ENCODE measurements at regions of chr12 and their contacts with region 1.

Region 1: GRCh38 chr12:123457980-123458783 is at the start of gene SNRNP35:
- DNase-seq: peak; percentile 88
- H3K4me3 Mint-ChIP-seq: peak within 1 kb of the TSS; percentile 97
- H3K27ac Mint-ChIP-seq: peak within 1 kb of the TSS; percentile 99
- H3K4me1 Mint-ChIP-seq: peaks cover 23% of the 10 kb centered on the region
- H3K27me3 Mint-ChIP-seq: no peaks in the 10 kb centered on the region
- total RNA-seq, gene SNRNP35: 28.6 to 30.6 TPM

Region 2: GRCh38 chr12:123388177-123388947 is 69.8 kb before region 1 on chr12:
- CTCF ChIA-PET with region 1: interaction called, 4 read pairs
- POLR2A ChIA-PET with region 1: interaction called, 4 read pairs
- intact Hi-C with region 1: loop called (anchors 5 kb)
- DNase-seq: peak; percentile 86
- H3K4me3 Mint-ChIP-seq: peak overlapping the region; percentile 80
- H3K27ac Mint-ChIP-seq: peak overlapping the region; percentile 88
- H3K4me1 Mint-ChIP-seq: peaks cover 39% of the 10 kb centered on the region
- H3K27me3 Mint-ChIP-seq: no peaks in the 10 kb centered on the region

Region 3: DNA sequence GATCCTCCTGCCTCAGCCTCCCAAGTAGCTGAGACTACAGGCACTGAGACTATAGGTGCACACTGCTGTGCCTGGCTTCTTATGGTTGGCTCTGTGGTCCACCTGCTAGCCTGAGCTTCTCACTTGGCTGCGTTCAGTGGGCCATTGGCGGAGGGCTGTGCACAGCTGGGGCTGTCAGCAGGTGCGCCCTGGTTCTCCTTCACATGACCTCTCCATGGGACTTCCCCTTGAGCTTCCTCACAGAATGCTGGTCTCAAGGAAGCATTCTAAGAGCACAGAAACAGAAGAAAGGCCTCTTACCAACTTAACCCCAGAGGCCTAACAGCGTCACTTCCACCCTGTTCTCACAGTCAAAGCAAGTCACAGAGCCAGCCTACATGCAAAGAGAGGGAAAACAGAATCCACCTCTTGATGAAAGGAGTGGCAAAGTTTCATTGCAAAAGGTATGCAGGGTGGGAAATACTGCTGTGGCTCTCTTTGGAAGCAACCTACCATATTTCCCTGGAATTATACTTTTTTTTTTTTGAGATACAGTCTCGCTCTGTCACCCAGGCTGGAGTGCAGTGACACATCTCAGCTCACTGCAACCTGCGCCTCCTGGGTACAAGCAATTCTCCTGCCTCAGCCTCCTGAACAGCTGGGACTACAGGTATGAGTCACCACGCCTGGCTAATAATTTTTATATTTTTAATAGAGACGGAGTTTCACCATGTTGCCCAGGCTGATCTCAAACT is 31.0 kb before region 1 on chr12:
- CTCF ChIA-PET with region 1: interaction called, 8 read pairs
- POLR2A ChIA-PET with region 1: interaction called, 11 read pairs
- intact Hi-C with region 1: loop called (anchors 2 kb)
- DNase-seq: peak; percentile 64
- H3K4me3 Mint-ChIP-seq: peak overlapping the region; percentile 54
- H3K27ac Mint-ChIP-seq: peak overlapping the region; percentile 92
- H3K4me1 Mint-ChIP-seq: peaks cover 31% of the 10 kb centered on the region
- H3K27me3 Mint-ChIP-seq: no peaks in the 10 kb centered on the region

Region 4: DNA sequence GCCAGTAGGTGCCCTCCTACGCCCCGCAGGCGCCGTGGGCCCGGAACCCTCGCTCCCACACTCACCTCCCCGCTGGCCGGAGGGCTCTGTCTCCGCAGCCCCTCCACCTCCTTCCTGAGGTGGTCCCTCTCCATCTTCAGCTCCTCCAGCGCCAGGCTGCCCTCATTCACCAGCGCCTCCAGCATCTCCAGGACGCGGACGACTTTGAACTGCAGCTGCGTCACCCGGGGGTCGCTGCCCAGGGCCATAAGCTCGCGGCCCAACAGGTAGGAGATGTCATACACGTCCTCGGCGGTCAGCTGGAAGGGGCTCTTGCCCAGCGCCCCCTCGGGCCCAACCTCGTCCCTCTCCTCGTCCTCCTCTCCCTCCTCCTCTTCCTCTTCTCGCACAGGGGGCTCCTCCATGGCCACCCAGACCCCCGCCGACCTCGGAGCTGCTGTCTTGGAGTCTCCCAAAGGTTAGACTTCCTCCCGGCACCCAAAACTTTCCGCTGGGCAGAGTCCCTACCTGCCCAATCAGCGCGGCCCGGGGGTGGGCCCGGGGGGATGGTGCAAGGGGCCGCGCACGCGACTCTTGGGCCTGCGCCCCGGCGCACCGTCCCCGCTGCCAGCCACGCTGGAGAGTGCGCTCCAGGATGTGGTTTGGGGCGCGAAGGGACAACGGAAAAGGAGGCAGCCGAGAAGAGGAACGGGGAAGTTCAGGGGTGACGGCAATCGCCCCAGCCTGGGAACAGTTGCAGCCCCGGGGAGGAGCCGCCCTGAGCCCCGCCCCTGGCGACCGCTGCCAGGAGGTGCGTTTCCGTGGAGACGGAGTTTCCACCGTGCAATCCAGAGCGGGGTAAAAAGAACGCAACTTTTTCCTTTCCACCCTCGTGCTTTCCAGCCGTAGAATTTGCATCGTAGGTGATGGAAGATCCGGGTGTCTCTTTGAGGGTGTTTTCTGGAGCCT is 21.9 kb before region 1 on chr12 and contains the start of gene RILPL2:
- CTCF ChIA-PET with region 1: interaction called, 4 read pairs
- POLR2A ChIA-PET with region 1: interaction called, 16 read pairs
- intact Hi-C with region 1: loop called (anchors 1 kb)
- DNase-seq: peak; percentile 97
- H3K4me3 Mint-ChIP-seq: peak within 1 kb of the TSS; percentile 99
- H3K27ac Mint-ChIP-seq: peak within 1 kb of the TSS; percentile 98
- H3K4me1 Mint-ChIP-seq: peaks cover 30% of the 10 kb centered on the region
- H3K27me3 Mint-ChIP-seq: no peaks in the 10 kb centered on the region
- total RNA-seq, gene RILPL2: 15.4 to 16.6 TPM

Region 5: DNA sequence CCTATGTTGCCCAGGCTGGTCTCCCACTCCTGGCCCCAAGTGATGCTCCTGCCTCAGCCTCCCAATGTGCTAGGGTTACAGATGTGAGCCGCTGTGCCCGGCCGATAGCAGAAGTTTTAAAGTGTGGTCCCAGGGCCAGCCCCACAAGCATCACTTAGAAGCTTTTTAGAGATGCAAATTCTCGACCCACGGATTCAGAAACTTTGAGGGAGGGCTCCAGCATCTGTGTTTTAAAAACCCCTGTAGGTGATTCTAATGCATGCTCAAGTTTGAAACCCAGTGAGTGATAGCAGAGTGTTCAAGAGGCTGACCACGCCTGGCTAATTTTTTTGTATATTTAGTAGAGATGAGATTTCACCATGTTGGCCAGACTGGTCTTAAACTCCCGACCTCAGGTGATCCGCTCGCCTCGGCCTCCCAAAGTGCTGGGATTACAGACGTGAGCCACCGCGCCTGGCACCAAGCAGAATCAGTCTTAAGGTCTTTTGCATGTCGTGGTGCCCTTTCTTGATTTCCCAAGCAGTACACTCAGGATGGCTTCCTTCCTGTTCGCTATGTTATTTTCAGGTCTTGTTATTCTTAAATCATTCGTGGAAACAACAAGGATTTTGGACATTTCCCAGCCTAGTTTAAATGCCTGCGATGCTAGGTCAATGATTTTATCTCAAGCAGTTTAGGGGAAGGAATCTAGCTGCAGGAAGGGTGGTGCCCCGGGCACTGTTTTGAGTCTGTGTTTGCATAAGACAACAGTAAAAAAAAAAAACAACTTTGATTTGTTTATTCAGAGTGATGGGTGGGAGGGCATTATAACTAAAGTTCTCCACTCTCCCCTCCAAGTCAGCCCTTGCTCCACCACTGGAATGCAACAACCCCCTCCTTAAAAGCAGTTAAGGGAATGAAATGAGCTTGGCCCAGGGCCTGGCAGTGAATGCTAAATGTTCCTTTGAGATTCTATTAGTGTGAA is 12.5 kb before region 1 on chr12:
- CTCF ChIA-PET with region 1: interaction called, 4 read pairs
- POLR2A ChIA-PET with region 1: interaction called, 15 read pairs
- intact Hi-C with region 1: no loop called
- DNase-seq: no peak
- H3K4me3 Mint-ChIP-seq: no peak overlapping the region
- H3K27ac Mint-ChIP-seq: peak overlapping the region; percentile 67
- H3K4me1 Mint-ChIP-seq: peaks cover 36% of the 10 kb centered on the region
- H3K27me3 Mint-ChIP-seq: no peaks in the 10 kb centered on the region

Region 6: DNA sequence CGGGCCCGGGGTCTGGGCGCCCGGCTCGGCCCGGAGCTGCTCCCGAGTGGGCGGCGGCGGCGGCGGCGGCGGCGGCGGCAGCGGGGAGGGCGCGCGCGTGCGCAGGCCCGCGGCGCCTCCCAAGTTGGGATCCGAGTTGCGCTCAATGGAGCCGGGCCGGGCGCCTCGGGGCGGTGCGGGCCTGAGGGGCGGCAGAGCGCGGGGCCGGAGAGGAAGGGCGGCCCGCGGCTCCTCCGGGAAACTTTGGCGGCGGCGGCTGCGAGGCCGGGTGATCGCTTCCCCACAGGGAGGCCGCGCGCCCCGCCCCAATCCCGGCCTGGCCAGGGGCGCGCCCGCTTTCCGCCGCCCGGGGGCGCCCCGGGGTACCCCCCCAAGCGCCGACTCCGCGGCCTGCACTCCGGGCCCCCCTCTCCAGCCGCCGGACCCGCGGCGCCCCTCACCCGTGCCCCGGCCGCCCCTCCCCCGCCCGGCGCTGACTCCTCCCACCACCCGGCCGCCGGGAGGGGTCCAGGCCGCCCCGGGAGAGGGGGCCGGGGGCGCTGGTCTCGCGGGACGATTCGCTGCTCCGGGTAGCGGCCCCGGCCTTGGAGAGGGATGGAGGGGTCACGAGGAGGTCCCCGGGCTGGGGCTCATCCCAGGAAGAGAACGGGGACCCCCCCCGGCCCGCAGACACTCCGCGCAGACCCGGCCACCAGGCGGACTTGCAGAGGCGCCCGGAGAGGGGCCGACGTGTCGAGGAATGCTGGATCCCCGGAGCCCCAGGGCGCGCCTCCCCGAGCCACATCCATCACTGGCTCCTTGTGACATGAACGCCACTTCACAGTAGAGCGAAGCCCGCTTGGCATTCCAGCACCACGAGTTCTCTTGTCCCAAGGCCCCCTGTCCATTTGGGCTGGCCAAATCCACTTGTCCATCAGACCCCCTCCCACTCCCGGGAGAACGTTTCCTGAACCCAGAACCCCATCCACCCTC is 75.8 kb after region 1 on chr12 and contains the start of gene RILPL1:
- CTCF ChIA-PET with region 1: interaction called, 3 read pairs
- POLR2A ChIA-PET with region 1: no interaction called
- intact Hi-C with region 1: loop called (anchors 5 kb)
- DNase-seq: peak; percentile 49
- H3K4me3 Mint-ChIP-seq: peak within 1 kb of the TSS; percentile 77
- H3K27ac Mint-ChIP-seq: peak within 1 kb of the TSS; percentile 62
- H3K4me1 Mint-ChIP-seq: peaks cover 17% of the 10 kb centered on the region
- H3K27me3 Mint-ChIP-seq: no peaks in the 10 kb centered on the region
- total RNA-seq, gene RILPL1: 4.0 to 4.8 TPM

Measured in activated CD4-positive, alpha-beta memory T cell treated with anti-CD3 and anti-CD28 coated beads for 36 hours (primary cell).